ENCODE measurements at regions of chr7 and their contacts with region 1.

Region 1: GRCh38 chr7:13742811-13743210 is 246.7 kb downstream of the ETV1 start:
- DNase-seq: peak; percentile 20
- H3K4me3 ChIP-seq: no peak overlapping the region
- H3K27ac ChIP-seq: no peak overlapping the region
- H3K27me3 ChIP-seq: no peaks in the 10 kb centered on the region
- CTCF ChIP-seq: peak; percentile 55

Region 2: GRCh38 chr7:13279854-13280435 is 462.9 kb before region 1 on chr7:
- CTCF ChIA-PET with region 1: interaction called, 11 read pairs
- POLR2A ChIA-PET with region 1: no interaction called
- DNase-seq: peak; percentile 3
- H3K4me3 ChIP-seq: no peak overlapping the region
- H3K27ac ChIP-seq: no peak overlapping the region
- H3K27me3 ChIP-seq: no peaks in the 10 kb centered on the region
- CTCF ChIP-seq: peak; percentile 33

Region 3: DNA sequence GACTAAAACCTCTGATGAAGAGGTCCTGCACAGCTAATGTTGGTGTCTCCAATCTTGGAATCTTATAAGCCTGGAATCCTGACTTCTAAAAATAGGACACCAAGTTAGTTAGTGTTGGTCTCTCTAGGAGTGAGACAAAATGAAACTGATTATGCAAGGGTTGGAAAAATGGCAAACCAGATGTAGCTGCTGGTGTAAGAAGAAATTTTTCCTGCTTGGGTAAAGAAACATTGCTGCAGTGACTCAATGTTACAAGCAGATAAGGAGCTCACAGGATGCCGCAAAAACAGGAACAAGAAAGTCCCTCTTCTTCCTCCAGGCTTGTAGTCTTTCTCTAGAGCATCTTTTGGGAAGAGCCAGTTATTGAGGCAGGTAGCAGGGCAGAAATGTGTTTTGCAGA is 202.4 kb before region 1 on chr7:
- CTCF ChIA-PET with region 1: interaction called, 10 read pairs
- POLR2A ChIA-PET with region 1: no interaction called
- DNase-seq: peak; percentile 24
- H3K4me3 ChIP-seq: no peak overlapping the region
- H3K27ac ChIP-seq: no peak overlapping the region
- H3K27me3 ChIP-seq: no peaks in the 10 kb centered on the region
- CTCF ChIP-seq: no peak

Region 4: DNA sequence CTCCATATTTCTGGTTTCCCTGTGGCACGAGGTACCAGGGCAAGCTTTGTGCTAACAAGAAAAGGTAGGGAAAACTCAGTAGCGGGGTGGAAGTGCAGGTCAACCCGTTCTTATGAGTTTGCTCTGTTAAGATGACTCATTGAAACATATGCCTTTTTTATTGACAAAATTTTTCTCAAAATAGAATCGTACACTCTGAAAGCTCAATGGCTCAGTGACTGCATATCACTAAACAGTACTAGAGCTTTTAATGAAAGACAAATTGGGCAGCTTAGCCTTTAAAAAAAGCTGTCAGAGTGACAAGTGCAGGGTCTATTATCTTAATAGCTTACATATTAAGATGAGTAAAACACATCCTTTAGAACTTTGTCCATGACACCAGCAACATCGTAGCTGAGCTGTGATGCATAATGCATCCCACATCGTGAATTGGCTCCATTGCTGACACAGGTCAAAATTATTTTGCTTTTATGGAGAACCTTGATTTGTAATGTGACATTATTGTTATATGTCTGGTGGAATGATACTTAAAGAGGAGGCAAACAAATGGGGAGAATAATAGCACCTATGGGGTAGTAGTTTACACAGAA is 17.7 kb before region 1 on chr7:
- CTCF ChIA-PET with region 1: interaction called, 10 read pairs
- POLR2A ChIA-PET with region 1: no interaction called
- DNase-seq: no peak
- H3K4me3 ChIP-seq: no peak overlapping the region
- H3K27ac ChIP-seq: no peak overlapping the region
- H3K27me3 ChIP-seq: no peaks in the 10 kb centered on the region
- CTCF ChIP-seq: no peak

Region 5: GRCh38 chr7:13731643-13732042 is 11.2 kb before region 1 on chr7:
- CTCF ChIA-PET with region 1: interaction called, 13 read pairs
- POLR2A ChIA-PET with region 1: no interaction called
- DNase-seq: no peak
- H3K4me3 ChIP-seq: no peak overlapping the region
- H3K27ac ChIP-seq: no peak overlapping the region
- H3K27me3 ChIP-seq: no peaks in the 10 kb centered on the region
- CTCF ChIP-seq: no peak

Region 6: GRCh38 chr7:13757841-13758240 is 15.0 kb after region 1 on chr7:
- CTCF ChIA-PET with region 1: interaction called, 18 read pairs
- POLR2A ChIA-PET with region 1: no interaction called
- DNase-seq: no peak
- H3K4me3 ChIP-seq: no peak overlapping the region
- H3K27ac ChIP-seq: no peak overlapping the region
- H3K27me3 ChIP-seq: no peaks in the 10 kb centered on the region
- CTCF ChIP-seq: no peak

Region 7: GRCh38 chr7:13981070-13981469 is 238.3 kb after region 1 on chr7:
- CTCF ChIA-PET with region 1: interaction called, 11 read pairs
- POLR2A ChIA-PET with region 1: no interaction called
- DNase-seq: peak; percentile 94
- H3K4me3 ChIP-seq: no peak overlapping the region; the same call in 1 of the 2 replicates
- H3K27ac ChIP-seq: no peak overlapping the region
- H3K27me3 ChIP-seq: no peaks in the 10 kb centered on the region
- CTCF ChIP-seq: no peak

Measured in AG04450 (cell line).